CD8-positive, alpha-beta T cell (primary cell): ENCODE measurements at regions of chr12 and their contacts with region 1.

Region 1: GRCh38 chr12:56041552-56042429 is at the start of gene RPS26:
- DNase-seq: peak; percentile 79 to 99 (median 92)
- ATAC-seq: peak; percentile 93
- H3K4me3 ChIP-seq: peak within 1 kb of the TSS; percentile 71 to 83
- H3K4me3 Mint-ChIP-seq: peak within 1 kb of the TSS; percentile 99
- H3K27ac ChIP-seq: peak within 1 kb of the TSS; percentile 75 to 95
- H3K27ac Mint-ChIP-seq: peak within 1 kb of the TSS; percentile 99
- H3K4me1 ChIP-seq: peaks cover 29% of the 10 kb centered on the region
- H3K4me1 Mint-ChIP-seq: peaks cover 42% of the 10 kb centered on the region
- H3K27me3 ChIP-seq: no peaks in the 10 kb centered on the region
- H3K27me3 Mint-ChIP-seq: no peaks in the 10 kb centered on the region
- CTCF ChIP-seq: peak; percentile 48
- total RNA-seq, gene RPS26: 33.8 to 36.7 TPM

Region 2: GRCh38 chr12:55320201-55320600 is 721.6 kb before region 1 on chr12:
- CTCF ChIA-PET with region 1: no interaction called
- POLR2A ChIA-PET with region 1: no interaction called
- intact Hi-C with region 1: no loop called
- DNase-seq: no peak
- ATAC-seq: no peak
- H3K4me3 ChIP-seq: no peak overlapping the region
- H3K4me3 Mint-ChIP-seq: no peak overlapping the region
- H3K27ac ChIP-seq: no peak overlapping the region
- H3K27ac Mint-ChIP-seq: no peak overlapping the region
- H3K4me1 ChIP-seq: no peaks in the 10 kb centered on the region
- H3K4me1 Mint-ChIP-seq: no peaks in the 10 kb centered on the region
- H3K27me3 ChIP-seq: no peaks in the 10 kb centered on the region
- H3K27me3 Mint-ChIP-seq: peaks cover 20% of the 10 kb centered on the region
- CTCF ChIP-seq: no peak

Region 3: GRCh38 chr12:55745361-55746146 is 296.2 kb before region 1 on chr12:
- CTCF ChIA-PET with region 1: no interaction called
- POLR2A ChIA-PET with region 1: no interaction called
- intact Hi-C with region 1: loop called in 1 of 2 experiments (anchors 2 kb)
- DNase-seq: no peak
- ATAC-seq: no peak
- H3K4me3 ChIP-seq: no peak overlapping the region
- H3K4me3 Mint-ChIP-seq: peak overlapping the region; percentile 92
- H3K27ac ChIP-seq: no peak overlapping the region
- H3K27ac Mint-ChIP-seq: peak overlapping the region; percentile 71
- H3K4me1 ChIP-seq: peaks cover 28% of the 10 kb centered on the region
- H3K4me1 Mint-ChIP-seq: peaks cover 30% of the 10 kb centered on the region
- H3K27me3 ChIP-seq: no peaks in the 10 kb centered on the region
- H3K27me3 Mint-ChIP-seq: no peaks in the 10 kb centered on the region
- CTCF ChIP-seq: no peak

Region 4: DNA sequence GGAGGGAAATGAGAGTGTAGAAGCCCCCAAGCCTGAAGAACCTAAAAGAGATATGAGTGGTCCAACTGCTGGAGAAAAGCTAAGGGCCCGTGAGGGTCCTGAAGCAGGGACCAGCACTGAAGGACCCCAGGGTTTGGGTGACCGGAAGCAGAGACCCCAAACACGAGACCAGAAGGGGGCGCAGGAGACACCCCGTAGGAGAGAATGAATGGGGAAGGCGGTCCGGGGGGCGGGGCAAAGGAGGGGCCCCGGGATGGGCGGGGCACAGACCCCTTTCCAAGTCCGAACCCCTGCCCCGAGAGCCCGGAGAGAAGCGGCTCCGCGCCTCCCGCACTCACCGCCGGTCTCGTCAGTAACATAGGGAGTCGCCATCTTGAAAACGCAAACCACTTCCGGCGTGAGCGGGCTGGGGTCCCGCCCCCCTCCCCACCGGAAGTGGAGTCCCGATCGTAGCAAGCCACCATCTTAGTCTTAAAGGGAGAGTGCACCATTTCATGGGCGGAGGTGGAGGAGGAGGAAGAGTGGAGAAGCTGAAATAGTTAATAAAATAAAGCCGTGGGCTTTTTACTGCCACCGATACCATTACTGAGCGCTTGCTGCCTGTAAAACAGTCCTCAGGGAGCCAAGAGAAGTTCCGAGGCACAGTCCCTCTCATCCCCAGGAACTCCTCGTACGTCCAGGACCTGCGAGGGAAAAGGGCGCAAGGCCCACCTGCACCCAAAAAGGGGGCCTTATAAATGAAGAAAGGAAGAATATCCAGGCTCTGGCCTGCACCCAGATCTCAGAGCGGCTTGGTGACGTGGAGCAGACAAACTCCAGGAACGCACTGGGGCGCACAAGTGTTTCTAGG is 114.8 kb before region 1 on chr12:
- CTCF ChIA-PET with region 1: no interaction called
- POLR2A ChIA-PET with region 1: interaction called, 3 read pairs
- intact Hi-C with region 1: loop called (anchors 1 kb)
- DNase-seq: peak; percentile 75 to 96 (median 88)
- ATAC-seq: peak; percentile 35
- H3K4me3 ChIP-seq: peak overlapping the region; percentile 90 to 98
- H3K4me3 Mint-ChIP-seq: peak overlapping the region; percentile 99
- H3K27ac ChIP-seq: peak overlapping the region; percentile 65 to 80
- H3K27ac Mint-ChIP-seq: peak overlapping the region; percentile 95
- H3K4me1 ChIP-seq: peaks cover 40% of the 10 kb centered on the region
- H3K4me1 Mint-ChIP-seq: peaks cover 51% of the 10 kb centered on the region
- H3K27me3 ChIP-seq: no peaks in the 10 kb centered on the region
- H3K27me3 Mint-ChIP-seq: no peaks in the 10 kb centered on the region
- CTCF ChIP-seq: peak; percentile 70

Region 5: GRCh38 chr12:56007564-56008559 is 33.9 kb before region 1 on chr12:
- CTCF ChIA-PET with region 1: interaction called, 3 read pairs
- POLR2A ChIA-PET with region 1: no interaction called
- intact Hi-C with region 1: loop called in 1 of 2 experiments (anchors 1 kb)
- DNase-seq: peak; percentile 24 to 80 (median 72)
- ATAC-seq: peak; percentile 94
- H3K4me3 ChIP-seq: peak overlapping the region; percentile 53 to 60
- H3K4me3 Mint-ChIP-seq: peak overlapping the region; percentile 80
- H3K27ac ChIP-seq: peak overlapping the region; percentile 35 to 56
- H3K27ac Mint-ChIP-seq: peak overlapping the region; percentile 85
- H3K4me1 ChIP-seq: peaks cover 15% of the 10 kb centered on the region
- H3K4me1 Mint-ChIP-seq: peaks cover 23% of the 10 kb centered on the region
- H3K27me3 ChIP-seq: no peaks in the 10 kb centered on the region
- H3K27me3 Mint-ChIP-seq: no peaks in the 10 kb centered on the region
- CTCF ChIP-seq: no peak

Region 6: DNA sequence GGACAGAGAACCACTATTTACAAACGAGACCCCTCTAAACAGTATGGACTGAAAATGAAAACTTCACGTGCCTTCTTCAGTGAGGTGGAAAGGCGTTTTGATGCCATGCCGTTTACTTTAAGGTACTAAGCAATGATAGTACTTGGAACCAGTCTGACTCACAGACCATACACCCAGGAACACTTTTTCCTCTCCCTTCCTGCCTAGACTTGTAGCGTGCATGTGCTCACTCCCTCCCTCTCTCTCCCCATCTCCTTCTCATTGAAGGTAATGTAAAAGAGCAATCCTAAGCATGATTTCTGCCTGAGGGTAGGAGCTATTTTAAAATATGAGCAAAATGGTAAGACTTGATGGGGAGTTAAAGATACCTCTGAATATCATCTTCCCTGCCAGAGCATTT is 68.8 kb after region 1 on chr12:
- CTCF ChIA-PET with region 1: interaction called, 12 read pairs
- POLR2A ChIA-PET with region 1: interaction called, 12 read pairs
- intact Hi-C with region 1: loop called in 1 of 2 experiments (anchors 2 kb)
- DNase-seq: no peak
- ATAC-seq: no peak
- H3K4me3 ChIP-seq: no peak overlapping the region
- H3K4me3 Mint-ChIP-seq: no peak overlapping the region
- H3K27ac ChIP-seq: no peak overlapping the region
- H3K27ac Mint-ChIP-seq: no peak overlapping the region
- H3K4me1 ChIP-seq: peaks cover 12% of the 10 kb centered on the region
- H3K4me1 Mint-ChIP-seq: peaks cover 18% of the 10 kb centered on the region
- H3K27me3 ChIP-seq: no peaks in the 10 kb centered on the region
- H3K27me3 Mint-ChIP-seq: no peaks in the 10 kb centered on the region
- CTCF ChIP-seq: no peak

Region 7: GRCh38 chr12:56224102-56224701 is 182.4 kb after region 1 on chr12 and contains the start of gene NABP2:
- CTCF ChIA-PET with region 1: interaction called, 7 read pairs
- POLR2A ChIA-PET with region 1: interaction called, 3 read pairs
- intact Hi-C with region 1: loop called in 1 of 2 experiments (anchors 10 kb)
- DNase-seq: peak; percentile 74 to 97 (median 91)
- ATAC-seq: peak; percentile 64
- H3K4me3 ChIP-seq: peak within 1 kb of the TSS; percentile 65 to 68
- H3K4me3 Mint-ChIP-seq: peak within 1 kb of the TSS; percentile 95
- H3K27ac ChIP-seq: peak within 1 kb of the TSS; percentile 53 to 85
- H3K27ac Mint-ChIP-seq: peak within 1 kb of the TSS; percentile 99
- H3K4me1 ChIP-seq: peaks cover 29% of the 10 kb centered on the region
- H3K4me1 Mint-ChIP-seq: peaks cover 44% of the 10 kb centered on the region
- H3K27me3 ChIP-seq: no peaks in the 10 kb centered on the region
- H3K27me3 Mint-ChIP-seq: no peaks in the 10 kb centered on the region
- CTCF ChIP-seq: peak; percentile 84
- total RNA-seq, gene NABP2: 6.8 to 7.4 TPM

Region 8: DNA sequence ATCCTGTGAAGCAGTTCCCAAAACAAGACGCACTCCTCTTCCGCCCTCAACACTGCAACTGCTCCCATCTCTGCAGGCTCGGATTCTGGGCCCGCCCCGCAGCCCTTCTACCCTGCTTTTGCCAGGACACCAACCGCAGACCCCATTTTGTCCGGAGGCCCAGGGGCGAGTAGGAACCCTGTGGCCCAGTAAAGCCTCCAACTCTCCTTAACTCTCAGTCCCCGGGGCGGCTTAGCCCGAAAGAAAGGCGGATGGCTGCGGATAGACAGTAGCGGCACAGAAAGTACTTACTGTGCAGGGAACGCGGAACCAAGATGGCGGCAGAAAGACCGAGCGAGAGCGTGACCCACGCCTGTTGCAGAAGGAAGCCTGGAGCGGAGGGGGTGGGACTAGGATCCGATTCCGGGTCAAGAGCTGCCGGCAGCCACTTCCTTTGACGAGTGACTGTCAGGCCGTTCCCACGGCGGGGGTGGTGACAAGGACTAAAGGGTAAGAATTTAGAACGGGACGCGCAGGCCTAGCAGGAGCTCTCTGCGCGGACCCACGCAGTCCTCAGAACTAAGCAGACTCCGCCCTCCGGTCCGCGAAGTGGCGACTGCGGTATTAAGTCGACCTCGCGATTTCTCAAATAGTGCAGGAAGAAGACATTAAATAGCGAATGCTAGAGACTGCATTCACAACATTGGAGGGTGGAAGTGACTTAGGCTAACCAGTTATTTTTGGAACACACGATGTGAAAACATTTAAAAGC is 683.4 kb after region 1 on chr12 and contains the start of gene NACA:
- CTCF ChIA-PET with region 1: no interaction called
- POLR2A ChIA-PET with region 1: no interaction called
- intact Hi-C with region 1: loop called in 1 of 2 experiments (anchors 10 kb)
- DNase-seq: peak; percentile 94 to 99 (median 97)
- ATAC-seq: peak; percentile 95
- H3K4me3 ChIP-seq: peak within 1 kb of the TSS; percentile 70 to 88
- H3K4me3 Mint-ChIP-seq: peak within 1 kb of the TSS; percentile 99
- H3K27ac ChIP-seq: peak within 1 kb of the TSS; percentile 75 to 80
- H3K27ac Mint-ChIP-seq: peak within 1 kb of the TSS; percentile 96
- H3K4me1 ChIP-seq: peaks cover 45% of the 10 kb centered on the region
- H3K4me1 Mint-ChIP-seq: peaks cover 52% of the 10 kb centered on the region
- H3K27me3 ChIP-seq: no peaks in the 10 kb centered on the region
- H3K27me3 Mint-ChIP-seq: no peaks in the 10 kb centered on the region
- CTCF ChIP-seq: no peak
- total RNA-seq, gene NACA: 1,373 to 1,407 TPM